ENCODE measurements at regions of chr6 and their contacts with region 1.

Region 1: DNA sequence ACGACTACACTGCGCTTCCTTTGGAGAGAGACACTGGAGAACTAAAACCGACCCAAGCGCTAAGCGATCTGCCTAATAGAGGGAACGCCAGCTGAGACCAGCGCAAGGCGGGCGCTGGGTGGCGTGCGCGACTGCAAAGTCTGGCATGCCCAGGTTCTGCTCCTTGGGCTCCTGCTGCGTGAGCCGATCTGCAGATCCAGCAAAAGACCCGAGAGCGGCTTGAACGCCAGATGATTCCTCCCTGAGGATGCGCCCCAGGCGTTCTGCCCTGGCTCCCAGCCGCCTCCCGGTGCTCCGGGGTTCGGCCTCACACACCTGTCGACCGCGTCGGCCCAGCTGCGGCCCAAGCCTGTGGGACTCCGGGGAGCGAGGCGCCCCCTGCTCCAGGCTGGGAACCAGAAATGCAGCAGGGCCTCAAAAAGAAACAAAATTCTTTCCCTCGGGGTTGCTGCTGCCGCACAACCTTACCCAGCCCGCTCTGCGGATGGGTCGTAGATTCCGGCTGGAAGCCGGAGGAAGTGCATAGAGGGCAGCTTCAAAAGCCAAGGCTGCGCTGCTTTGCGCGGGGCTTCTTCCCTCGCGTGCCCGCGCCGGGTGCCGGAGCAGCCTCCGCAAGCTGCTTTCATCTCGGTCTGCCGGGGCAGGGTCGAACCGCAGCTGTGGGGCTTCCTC is 17.9 kb upstream of the PRDM13 start:
- DNase-seq: peak; percentile 15
- ATAC-seq: peak; percentile 97
- H3K4me3 ChIP-seq: peak overlapping the region; percentile 40 to 68
- H3K27ac ChIP-seq: no peak overlapping the region
- H3K4me1 ChIP-seq: peaks cover 3% of the 10 kb centered on the region; the same call in 1 of the 2 replicates
- H3K27me3 ChIP-seq: peaks cover 19% of the 10 kb centered on the region
- CTCF ChIP-seq: peak; percentile 83

Region 2: DNA sequence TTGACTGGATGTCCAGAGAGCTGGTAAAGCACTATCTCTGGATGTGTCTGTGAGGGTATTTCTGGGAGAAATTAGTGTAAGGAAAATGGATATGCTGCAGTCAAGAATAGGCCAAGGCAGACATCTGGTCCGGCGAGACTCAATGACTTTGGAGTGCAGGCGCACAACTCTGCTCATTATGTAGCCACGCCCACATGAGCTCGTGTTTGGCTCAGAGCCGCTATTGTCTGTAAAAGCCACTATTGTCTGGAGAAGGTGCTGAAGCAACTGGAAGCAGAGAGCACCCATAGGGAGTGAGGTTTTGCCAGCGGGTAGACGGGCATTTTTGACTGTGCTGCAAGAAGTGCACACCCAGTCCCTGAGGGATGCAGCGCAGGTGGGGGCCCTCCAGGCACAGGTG is 1059.4 kb before region 1 on chr6:
- CTCF ChIA-PET with region 1: no interaction called
- POLR2A ChIA-PET with region 1: no interaction called
- in situ Hi-C with region 1: no loop called
- intact Hi-C with region 1: no loop called
- DNase-seq: no peak
- ATAC-seq: no peak
- H3K4me3 ChIP-seq: no peak overlapping the region
- H3K27ac ChIP-seq: no peak overlapping the region
- H3K4me1 ChIP-seq: no peaks in the 10 kb centered on the region
- H3K27me3 ChIP-seq: no peaks in the 10 kb centered on the region
- CTCF ChIP-seq: no peak

Region 3: GRCh38 chr6:99467509-99468106 is 121.1 kb before region 1 on chr6:
- CTCF ChIA-PET with region 1: no interaction called
- POLR2A ChIA-PET with region 1: no interaction called
- in situ Hi-C with region 1: no loop called
- intact Hi-C with region 1: no loop called
- DNase-seq: no peak
- ATAC-seq: no peak
- H3K4me3 ChIP-seq: no peak overlapping the region
- H3K27ac ChIP-seq: no peak overlapping the region
- H3K4me1 ChIP-seq: no peaks in the 10 kb centered on the region
- H3K27me3 ChIP-seq: no peaks in the 10 kb centered on the region
- CTCF ChIP-seq: peak; percentile 73; the same call in 1 of the 2 replicates

Region 4: DNA sequence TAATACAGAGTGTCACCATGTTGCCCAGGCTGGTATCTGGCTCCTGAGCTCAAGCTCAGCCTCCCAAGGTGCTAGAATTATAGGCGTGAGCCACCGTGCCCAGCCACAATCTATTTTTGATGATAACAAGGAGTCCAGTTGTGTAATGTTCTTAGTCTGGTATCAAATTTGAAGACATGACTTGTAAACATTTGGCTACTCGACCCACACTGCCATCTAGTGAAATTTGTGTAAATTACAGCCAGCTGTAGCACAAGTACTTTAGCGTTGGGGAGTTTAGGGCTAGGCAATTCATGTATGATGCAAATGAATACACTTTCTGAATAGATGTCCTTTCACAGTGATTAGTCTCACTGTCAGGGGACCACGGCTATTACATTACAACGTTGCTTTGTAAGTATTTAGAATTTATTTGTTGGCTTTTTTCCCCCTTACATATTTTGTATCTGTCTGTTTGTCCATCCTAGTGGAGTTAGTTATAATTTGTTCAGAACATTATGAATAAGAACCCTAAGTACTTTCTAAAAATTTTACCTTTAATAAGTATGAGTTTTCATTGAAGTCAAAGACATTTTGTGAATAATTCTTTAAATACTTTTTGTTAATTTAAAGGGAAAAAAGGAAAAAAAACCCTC is 157.6 kb after region 1 on chr6:
- CTCF ChIA-PET with region 1: interaction called, 4 read pairs
- POLR2A ChIA-PET with region 1: no interaction called
- in situ Hi-C with region 1: no loop called
- intact Hi-C with region 1: loop called (anchors 5 kb)
- DNase-seq: peak; percentile 61
- ATAC-seq: peak; percentile 87
- H3K4me3 ChIP-seq: no peak overlapping the region
- H3K27ac ChIP-seq: no peak overlapping the region
- H3K4me1 ChIP-seq: no peaks in the 10 kb centered on the region
- H3K27me3 ChIP-seq: peaks cover 9% of the 10 kb centered on the region
- CTCF ChIP-seq: peak; percentile 85

Region 5: DNA sequence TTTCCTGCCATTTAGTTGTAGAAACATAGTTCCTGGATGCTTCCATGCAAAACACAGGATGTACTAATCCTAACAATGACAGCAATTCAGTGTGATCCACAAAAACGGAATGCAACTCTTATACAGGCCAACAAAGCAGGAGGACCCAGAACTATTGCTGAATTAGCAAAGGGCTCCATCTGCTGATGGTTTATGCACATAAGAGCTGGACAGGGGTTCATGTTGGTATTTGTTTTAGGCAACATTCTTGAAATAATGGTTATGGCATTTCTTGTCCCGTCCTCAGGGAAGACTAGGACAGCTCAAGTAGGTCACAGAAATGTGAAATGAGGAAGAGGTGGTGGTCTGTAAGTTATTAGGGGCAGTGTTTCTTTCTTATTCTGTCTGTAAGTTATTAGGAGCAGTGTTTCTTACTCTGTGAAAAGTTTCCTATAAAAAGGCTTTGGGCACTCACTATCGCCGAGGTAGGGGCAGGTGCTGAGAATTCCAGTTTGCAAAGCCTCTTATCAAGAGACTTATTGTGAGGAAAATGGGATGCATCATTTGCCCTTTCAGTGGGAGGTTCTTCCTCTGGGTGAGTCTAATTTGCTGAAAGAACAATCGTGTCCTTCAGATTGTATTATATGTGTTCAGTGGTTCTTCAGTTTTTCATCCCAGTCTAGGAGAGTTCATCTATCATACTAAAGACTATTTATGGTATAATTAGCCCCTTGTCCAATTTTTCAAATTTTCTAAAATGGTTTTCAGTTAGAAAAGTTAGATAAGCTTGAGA is 234.2 kb after region 1 on chr6:
- CTCF ChIA-PET with region 1: no interaction called
- POLR2A ChIA-PET with region 1: no interaction called
- in situ Hi-C with region 1: no loop called
- intact Hi-C with region 1: loop called (anchors 5 kb)
- DNase-seq: peak; percentile 12
- ATAC-seq: peak; percentile 90
- H3K4me3 ChIP-seq: no peak overlapping the region
- H3K27ac ChIP-seq: no peak overlapping the region
- H3K4me1 ChIP-seq: no peaks in the 10 kb centered on the region
- H3K27me3 ChIP-seq: peaks cover 15% of the 10 kb centered on the region
- CTCF ChIP-seq: peak; percentile 74